ENCODE measurements at regions of chr11 and their contacts with region 1.

Region 1: DNA sequence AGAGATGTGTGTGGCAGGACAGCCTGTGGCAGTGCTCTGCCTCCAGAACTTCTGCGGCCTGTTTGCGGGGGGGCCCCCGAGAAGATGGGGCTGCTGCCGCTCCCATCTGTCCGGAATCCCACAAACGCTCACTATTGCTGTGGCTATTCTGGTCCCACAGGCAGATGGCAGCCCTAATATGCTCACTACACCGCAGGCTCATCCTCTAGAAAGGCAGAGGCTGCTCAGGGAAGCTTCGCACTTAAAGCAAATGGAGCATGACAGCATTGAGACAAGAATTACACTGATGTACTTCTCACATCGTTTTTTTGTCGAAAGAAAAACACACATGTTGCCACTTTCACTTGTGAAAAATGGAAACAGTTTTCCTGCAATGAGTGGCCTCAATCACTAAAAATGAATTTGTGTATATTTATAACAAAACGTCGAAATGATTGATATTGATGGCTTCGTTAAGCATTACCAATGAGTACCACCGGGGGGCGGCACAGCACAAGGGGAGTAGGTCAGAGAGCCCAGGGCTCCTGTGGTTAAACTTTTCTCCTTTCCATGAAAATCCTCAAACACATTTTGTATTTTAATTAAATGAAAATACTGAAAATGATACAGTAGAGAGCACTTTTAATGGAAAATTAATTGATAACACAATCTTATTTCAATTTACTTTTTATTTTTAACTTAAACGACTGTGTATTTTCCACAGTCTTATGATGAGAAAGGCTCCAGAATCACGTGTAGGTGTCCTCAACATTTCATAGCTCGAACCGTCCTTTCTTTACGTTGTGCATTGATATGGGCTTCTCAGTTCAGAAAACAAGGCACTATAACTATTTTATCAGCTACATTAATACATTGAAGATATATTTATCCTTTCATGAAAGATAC is 69.1 kb downstream of the CTTN start:
- DNase-seq: peak; percentile 28 to 67 (median 49)
- H3K4me3 ChIP-seq: no peak overlapping the region
- H3K27ac ChIP-seq: no peak overlapping the region
- H3K4me1 ChIP-seq: no peaks in the 10 kb centered on the region
- H3K27me3 ChIP-seq: no peaks in the 10 kb centered on the region
- CTCF ChIP-seq: peak; percentile 51 to 59 (median 55)
- EP300 ChIP-seq: no peak
- POLR2A ChIP-seq: no peak

Region 2: DNA sequence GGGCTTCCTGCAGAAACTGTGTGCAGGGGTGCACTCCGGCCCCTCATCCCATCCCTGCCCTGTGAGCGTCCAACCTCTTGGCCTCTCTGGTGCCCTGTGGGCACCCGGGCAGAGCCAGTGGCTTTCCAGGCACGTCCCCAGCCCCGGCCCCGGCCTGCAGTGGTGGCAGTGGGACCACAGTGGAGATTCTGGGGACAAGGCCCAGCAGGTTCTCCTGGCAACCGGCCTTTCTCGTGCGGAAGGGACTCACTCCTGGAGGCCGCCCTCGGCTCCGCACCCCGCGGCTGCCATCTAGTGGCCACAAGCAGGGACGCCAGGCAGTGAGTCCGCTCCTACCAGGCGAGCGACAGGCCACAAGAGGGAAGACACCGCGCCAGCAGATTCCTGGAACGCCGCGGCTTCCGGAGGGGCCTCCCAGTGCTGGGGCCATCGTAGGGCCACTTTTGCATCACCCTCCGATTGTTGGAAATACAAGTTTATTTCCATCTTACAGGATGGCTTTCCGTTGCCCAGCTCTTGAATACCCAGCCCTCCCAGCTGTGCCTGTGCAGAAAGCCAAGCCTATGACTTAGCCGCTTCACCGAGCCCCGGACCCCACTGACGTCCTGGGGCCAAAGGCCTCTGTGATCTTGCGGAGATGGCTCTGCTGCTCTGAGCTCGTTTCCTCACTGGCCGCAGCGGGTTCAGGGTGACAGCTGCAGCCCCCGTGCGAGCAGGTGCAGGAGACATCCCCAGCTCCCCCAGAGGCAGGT is 288.1 kb after region 1 on chr11:
- intact Hi-C with region 1: loop called in 2 of 4 experiments (anchors 5 kb)
- DNase-seq: peak in 4 of 5 donors; percentile 23 to 73 (median 52)
- H3K4me3 ChIP-seq: no peak overlapping the region
- H3K27ac ChIP-seq: no peak overlapping the region
- H3K4me1 ChIP-seq: no peaks in the 10 kb centered on the region
- H3K27me3 ChIP-seq: no peaks in the 10 kb centered on the region
- CTCF ChIP-seq: peak; percentile 15 to 71 (median 23)
- EP300 ChIP-seq: no peak
- POLR2A ChIP-seq: no peak